ENCODE measurements at regions of chr7 and their contacts with region 1.

Region 1: GRCh38 chr7:44885394-44886317 is at the start of gene PURB:
- DNase-seq: peak; percentile 99
- ATAC-seq: peak; percentile 92
- H3K4me3 Mint-ChIP-seq: peak within 1 kb of the TSS; percentile 91
- H3K27ac Mint-ChIP-seq: peak within 1 kb of the TSS; percentile 97
- H3K4me1 Mint-ChIP-seq: peaks cover 51% of the 10 kb centered on the region
- H3K27me3 Mint-ChIP-seq: no peaks in the 10 kb centered on the region
- total RNA-seq, gene PURB: 34.8 to 35.6 TPM

Region 2: GRCh38 chr7:44515590-44516268 is 369.9 kb before region 1 on chr7:
- POLR2A ChIA-PET with region 1: no interaction called
- DNase-seq: no peak
- ATAC-seq: no peak
- H3K4me3 Mint-ChIP-seq: no peak overlapping the region
- H3K27ac Mint-ChIP-seq: no peak overlapping the region
- H3K4me1 Mint-ChIP-seq: peaks cover 2% of the 10 kb centered on the region
- H3K27me3 Mint-ChIP-seq: peaks cover 2% of the 10 kb centered on the region

Region 3: DNA sequence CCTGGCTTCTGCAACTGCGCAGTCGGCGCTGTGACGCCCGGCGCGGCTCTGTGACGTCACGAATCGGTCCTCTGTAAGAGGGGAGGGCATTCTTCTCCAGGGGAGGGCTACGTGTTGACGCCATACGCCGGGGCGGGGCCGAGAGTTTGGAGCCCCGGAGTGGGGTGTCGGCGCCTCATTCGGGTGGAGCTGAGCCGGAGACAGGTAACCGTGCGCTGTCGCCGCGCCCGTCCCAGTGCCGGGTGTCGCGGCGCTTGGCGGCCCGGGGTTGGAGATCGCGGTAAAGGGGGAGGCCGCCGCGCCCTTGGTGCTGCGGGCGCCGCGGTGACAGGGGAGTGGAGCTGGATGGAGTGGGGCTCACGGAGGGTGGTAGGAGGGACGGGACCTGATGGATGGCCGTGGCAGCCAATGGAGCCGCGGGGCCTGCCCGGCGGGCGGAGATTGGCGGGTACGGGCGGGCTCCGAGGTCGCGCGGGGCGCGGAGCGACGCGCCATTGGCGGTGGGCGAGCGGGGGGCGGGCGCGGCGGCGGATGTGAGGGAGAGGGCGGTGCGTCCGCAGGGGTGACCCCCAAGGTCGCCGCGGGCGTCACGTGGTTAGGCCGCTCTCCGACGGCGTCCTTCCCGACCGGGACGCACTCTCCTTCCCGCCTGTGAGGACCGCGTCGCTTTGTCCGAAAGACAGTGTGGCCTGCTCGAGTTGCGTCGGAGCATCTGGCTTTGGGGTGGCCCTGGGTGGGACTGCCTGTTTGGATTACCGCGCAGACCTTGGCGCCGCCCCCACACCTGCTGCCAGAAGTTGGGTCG is 279.0 kb before region 1 on chr7 and contains the start of gene OGDH:
- POLR2A ChIA-PET with region 1: interaction called, 20 read pairs
- DNase-seq: peak; percentile 99
- ATAC-seq: peak; percentile 98
- H3K4me3 Mint-ChIP-seq: peak within 1 kb of the TSS; percentile 99
- H3K27ac Mint-ChIP-seq: peak within 1 kb of the TSS; percentile 100
- H3K4me1 Mint-ChIP-seq: peaks cover 32% of the 10 kb centered on the region
- H3K27me3 Mint-ChIP-seq: peaks cover 11% of the 10 kb centered on the region
- total RNA-seq, gene OGDH: 99.6 to 103 TPM

Region 4: DNA sequence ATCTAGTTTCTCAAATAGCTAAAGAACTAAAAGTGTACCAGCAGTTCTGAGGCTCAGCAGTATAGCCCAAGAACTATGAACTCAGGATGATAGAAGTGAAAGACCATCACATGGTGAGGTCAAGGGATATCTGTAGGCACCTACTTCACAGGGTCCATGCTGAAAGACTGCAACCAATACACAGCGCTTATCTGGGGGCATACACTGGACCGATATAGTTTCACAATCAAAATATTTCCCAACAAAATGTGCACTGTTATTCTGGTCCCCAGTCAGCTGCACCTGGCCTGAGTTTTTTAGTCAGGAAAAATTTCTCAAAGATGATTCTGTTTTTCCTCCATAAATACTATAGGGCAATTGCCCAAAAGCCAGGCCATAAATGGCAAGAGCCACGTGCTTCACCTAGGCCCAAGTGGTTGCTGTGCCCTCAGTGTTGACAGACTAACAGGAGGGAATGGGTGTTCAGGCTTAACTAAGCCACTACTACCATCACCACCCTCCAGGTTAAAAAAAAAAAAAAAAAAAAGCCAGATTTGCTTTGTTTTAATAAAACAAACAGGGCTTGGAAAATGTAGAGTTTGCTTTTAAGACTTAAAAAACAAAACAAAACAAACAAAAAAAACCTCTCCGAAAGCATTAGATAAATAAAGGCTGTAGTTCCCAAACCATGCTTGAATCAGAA is 220.7 kb before region 1 on chr7:
- POLR2A ChIA-PET with region 1: no interaction called
- DNase-seq: no peak
- ATAC-seq: no peak
- H3K4me3 Mint-ChIP-seq: no peak overlapping the region
- H3K27ac Mint-ChIP-seq: no peak overlapping the region
- H3K4me1 Mint-ChIP-seq: no peaks in the 10 kb centered on the region
- H3K27me3 Mint-ChIP-seq: no peaks in the 10 kb centered on the region

Region 5: GRCh38 chr7:44847508-44847920 is 38.1 kb before region 1 on chr7:
- POLR2A ChIA-PET with region 1: interaction called, 98 read pairs
- DNase-seq: peak; percentile 95
- ATAC-seq: peak; percentile 70
- H3K4me3 Mint-ChIP-seq: peak overlapping the region; percentile 87
- H3K27ac Mint-ChIP-seq: peak overlapping the region; percentile 97
- H3K4me1 Mint-ChIP-seq: peaks cover 37% of the 10 kb centered on the region
- H3K27me3 Mint-ChIP-seq: no peaks in the 10 kb centered on the region

Region 6: DNA sequence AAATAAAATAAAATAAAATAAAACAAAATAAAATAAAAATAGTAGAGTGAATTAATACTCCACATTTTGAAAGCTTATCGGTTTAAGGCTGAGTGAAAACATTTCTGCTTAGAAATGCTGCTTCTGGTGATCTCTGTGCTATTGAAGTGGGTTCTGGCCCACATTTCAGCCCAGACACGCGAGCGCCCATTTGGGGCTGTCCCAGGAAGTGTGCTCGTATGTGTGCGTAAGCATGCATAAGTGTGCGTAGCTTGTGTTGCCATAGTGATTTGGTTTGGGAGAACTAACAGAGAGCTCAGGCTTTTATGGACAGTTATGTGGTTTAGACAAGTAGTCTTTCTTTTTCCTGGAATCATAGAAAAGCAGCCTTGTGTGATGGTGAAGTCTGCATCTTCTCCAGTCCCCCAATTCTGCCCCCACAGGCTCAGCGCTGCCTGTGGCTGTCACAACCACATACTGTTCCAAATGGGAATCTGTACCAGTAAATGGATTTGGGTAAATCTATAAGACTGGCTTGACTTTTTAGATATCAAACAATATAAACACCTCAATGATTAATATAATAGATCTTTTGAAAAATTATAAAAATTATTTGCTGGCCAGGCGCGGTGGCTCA is 29.4 kb after region 1 on chr7:
- POLR2A ChIA-PET with region 1: interaction called, 54 read pairs
- DNase-seq: peak; percentile 79
- ATAC-seq: peak; percentile 97
- H3K4me3 Mint-ChIP-seq: peak overlapping the region; percentile 75
- H3K27ac Mint-ChIP-seq: peak overlapping the region; percentile 90
- H3K4me1 Mint-ChIP-seq: peaks cover 29% of the 10 kb centered on the region
- H3K27me3 Mint-ChIP-seq: no peaks in the 10 kb centered on the region

Region 7: GRCh38 chr7:44944821-44945220 is 59.2 kb after region 1 on chr7:
- POLR2A ChIA-PET with region 1: no interaction called
- DNase-seq: no peak
- ATAC-seq: no peak
- H3K4me3 Mint-ChIP-seq: no peak overlapping the region
- H3K27ac Mint-ChIP-seq: no peak overlapping the region
- H3K4me1 Mint-ChIP-seq: no peaks in the 10 kb centered on the region
- H3K27me3 Mint-ChIP-seq: peaks cover 38% of the 10 kb centered on the region

Region 8: GRCh38 chr7:44980393-44981034 is 94.9 kb after region 1 on chr7:
- POLR2A ChIA-PET with region 1: interaction called, 18 read pairs
- DNase-seq: peak; percentile 59
- ATAC-seq: peak; percentile 10
- H3K4me3 Mint-ChIP-seq: peak overlapping the region; percentile 94
- H3K27ac Mint-ChIP-seq: peak overlapping the region; percentile 93
- H3K4me1 Mint-ChIP-seq: peaks cover 60% of the 10 kb centered on the region
- H3K27me3 Mint-ChIP-seq: no peaks in the 10 kb centered on the region

Measured in activated naive CD8-positive, alpha-beta T cell treated with anti-CD3 and anti-CD28 coated beads, Interleukin-2, amount 10 ng/mL, durations not matched to agents 7 days and 5 days (primary cell).